Natural killer cell (primary cell): ENCODE measurements at regions of chr19 and their contacts with region 1.

Region 1: DNA sequence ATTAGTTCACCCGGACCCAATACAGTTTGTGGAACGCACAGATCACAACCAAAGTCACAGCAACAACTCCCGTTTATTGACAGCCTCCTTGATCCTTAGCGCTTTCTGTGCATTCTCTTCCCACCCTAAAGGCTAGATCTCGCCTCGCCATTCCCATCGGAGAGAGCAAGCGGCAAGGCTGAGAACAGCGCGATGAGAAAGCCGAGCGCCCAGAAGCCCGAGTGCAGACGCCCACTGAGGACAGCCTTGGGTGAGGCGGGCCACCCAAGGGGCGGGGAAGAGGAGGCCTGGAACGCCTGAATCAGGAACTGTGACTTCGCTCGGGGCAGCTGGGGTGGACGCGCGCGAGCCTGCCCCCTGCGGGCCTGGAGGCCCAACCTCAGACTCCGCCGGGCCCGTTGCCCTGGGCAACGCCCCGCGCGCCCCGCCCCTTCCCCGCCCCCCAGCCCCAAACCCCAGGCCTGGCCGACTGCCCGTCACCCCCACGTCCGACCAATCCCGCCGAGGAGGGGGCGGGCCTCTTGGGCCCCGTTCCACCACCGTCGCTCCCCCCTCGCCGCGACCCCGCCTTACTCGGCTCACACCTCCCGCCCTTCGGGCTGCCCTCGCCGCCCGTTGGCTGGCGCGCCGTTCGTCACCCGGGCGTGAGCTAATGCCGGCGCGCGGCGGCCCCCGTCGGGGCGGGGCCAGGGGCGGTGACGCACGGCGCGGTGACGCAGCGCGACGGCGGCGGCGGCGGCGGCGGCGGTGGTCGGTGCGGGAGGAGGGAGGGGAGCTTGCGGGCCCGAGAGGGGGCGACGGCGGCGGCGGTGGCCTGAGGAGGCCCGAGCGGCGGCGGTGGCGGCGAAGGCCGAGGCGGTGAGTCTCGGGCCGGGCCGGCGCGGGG is at the start of gene SAMD4B:
- DNase-seq: peak; percentile 99
- ATAC-seq: peak; percentile 88 to 96 (median 88)
- H3K4me3 ChIP-seq: peak within 1 kb of the TSS; percentile 97
- H3K4me3 Mint-ChIP-seq: peak within 1 kb of the TSS; percentile 99
- H3K27ac ChIP-seq: peak within 1 kb of the TSS; percentile 86
- H3K27ac Mint-ChIP-seq: peak within 1 kb of the TSS; percentile 97
- H3K4me1 ChIP-seq: peaks cover 23% of the 10 kb centered on the region
- H3K4me1 Mint-ChIP-seq: peaks cover 48 to 66% of the 10 kb centered on the region in 2 donors
- H3K27me3 ChIP-seq: no peaks in the 10 kb centered on the region
- H3K27me3 Mint-ChIP-seq: no peaks in the 10 kb centered on the region
- CTCF ChIP-seq: peak; percentile 80
- total RNA-seq, gene SAMD4B: 67.8 to 80.8 (median 78.9) TPM

Region 2: DNA sequence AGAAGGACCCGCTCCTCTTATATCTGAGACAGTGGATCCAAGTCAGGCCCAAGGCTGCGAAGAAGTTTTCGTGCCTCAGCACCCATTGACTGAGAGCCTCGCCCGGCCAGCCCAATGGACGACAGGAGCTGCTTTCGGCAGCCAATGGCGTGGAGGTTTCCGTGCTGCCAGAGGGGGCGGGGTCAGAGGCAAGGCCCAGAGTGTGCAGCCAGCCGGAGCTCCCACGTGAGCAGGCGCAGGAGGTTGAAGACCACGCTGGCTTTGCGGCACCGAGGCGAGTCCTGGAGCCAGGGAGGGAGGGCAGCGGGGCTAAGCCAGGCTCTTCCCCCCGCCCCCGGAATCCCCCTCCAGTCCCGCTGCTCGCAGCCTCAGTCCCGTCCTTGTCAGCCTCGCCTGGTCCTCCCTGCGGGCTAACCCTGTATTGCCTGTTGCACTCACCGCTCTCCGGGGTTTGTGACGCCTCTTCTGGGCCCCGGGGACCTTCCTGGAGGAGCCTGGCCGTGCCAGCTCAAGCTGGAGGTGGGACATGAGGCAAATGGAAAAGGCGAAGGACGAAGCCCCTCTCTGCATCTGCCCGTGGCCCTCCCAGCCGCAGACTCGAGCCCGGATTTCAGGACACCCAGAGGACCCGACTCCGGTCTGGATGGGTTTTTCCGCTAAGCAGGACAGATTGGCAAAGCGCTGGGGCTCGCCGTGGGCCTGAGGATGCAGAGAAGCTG is 94.9 kb before region 1 on chr19:
- intact Hi-C with region 1: no loop called
- DNase-seq: peak in 1 of 2 donors; percentile 58
- ATAC-seq: peak in 1 of 3 donors; percentile 70
- H3K4me3 ChIP-seq: no peak overlapping the region
- H3K4me3 Mint-ChIP-seq: peak overlapping the region; percentile 45
- H3K27ac ChIP-seq: no peak overlapping the region
- H3K27ac Mint-ChIP-seq: no peak overlapping the region
- H3K4me1 ChIP-seq: peaks cover 14% of the 10 kb centered on the region
- H3K4me1 Mint-ChIP-seq: no peaks in the 10 kb centered on the region
- H3K27me3 ChIP-seq: peaks cover 17% of the 10 kb centered on the region
- H3K27me3 Mint-ChIP-seq: peaks cover 12 to 13% of the 10 kb centered on the region in 2 donors
- CTCF ChIP-seq: no peak

Region 3: DNA sequence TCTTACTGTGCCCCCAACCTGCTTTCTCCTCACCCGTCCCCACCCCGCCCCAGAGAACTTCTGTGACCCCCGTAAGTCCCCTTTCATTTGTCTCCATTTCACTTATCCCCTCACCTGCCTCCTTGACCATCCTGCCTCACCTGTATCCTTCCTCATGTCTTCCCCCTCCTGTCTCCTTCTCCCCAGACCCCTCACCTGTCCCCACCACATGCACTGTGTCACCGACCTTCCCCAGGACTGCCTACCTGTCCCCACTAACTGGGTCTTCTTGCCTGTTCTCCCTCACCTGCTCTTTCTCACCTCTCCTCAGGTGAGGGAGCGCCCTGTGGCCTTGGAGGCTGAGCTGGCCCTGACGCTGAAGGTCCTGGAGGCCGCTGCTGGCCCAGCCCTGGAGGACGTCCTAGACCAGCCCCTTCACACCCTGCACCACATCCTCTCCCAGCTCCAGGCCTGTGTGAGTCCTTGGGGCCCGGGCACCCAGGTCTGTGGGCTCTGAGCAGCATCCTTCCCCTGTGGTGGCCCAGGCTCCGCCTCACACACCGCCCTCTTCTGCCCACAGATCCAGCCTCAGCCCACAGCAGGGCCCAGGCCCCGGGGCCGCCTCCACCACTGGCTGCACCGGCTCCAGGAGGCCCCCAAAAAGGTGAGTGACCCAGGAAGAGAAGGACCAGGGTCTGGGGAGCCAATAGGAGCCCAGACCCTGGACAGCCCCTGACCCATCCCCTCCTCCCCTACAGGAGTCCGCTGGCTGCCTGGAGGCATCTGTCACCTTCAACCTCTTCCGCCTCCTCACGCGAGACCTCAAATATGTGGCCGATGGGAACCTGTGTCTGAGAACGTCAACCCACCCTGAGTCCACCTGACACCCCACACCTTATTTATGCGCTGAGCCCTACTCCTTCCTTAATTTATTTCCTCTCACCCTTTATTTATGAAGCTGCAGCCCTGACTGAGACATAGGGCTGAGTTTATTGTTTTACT is 44.0 kb before region 1 on chr19:
- intact Hi-C with region 1: loop called (anchors 5 kb)
- DNase-seq: peak; percentile 80 to 81
- ATAC-seq: peak; percentile 83 to 93 (median 91)
- H3K4me3 ChIP-seq: peak overlapping the region; percentile 41
- H3K4me3 Mint-ChIP-seq: peak overlapping the region; percentile 86
- H3K27ac ChIP-seq: peak overlapping the region; percentile 66
- H3K27ac Mint-ChIP-seq: peak overlapping the region; percentile 80 to 81
- H3K4me1 ChIP-seq: peaks cover 44% of the 10 kb centered on the region
- H3K4me1 Mint-ChIP-seq: peaks cover 39 to 47% of the 10 kb centered on the region in 2 donors
- H3K27me3 ChIP-seq: no peaks in the 10 kb centered on the region
- H3K27me3 Mint-ChIP-seq: no peaks in the 10 kb centered on the region
- CTCF ChIP-seq: no peak

Region 4: GRCh38 chr19:39381910-39382611 is 40.1 kb after region 1 on chr19:
- intact Hi-C with region 1: no loop called
- DNase-seq: no peak
- ATAC-seq: no peak
- H3K4me3 ChIP-seq: no peak overlapping the region
- H3K4me3 Mint-ChIP-seq: no peak overlapping the region
- H3K27ac ChIP-seq: no peak overlapping the region
- H3K27ac Mint-ChIP-seq: peak overlapping the region in 1 of 2 donors; percentile 26
- H3K4me1 ChIP-seq: no peaks in the 10 kb centered on the region
- H3K4me1 Mint-ChIP-seq: peaks cover 0 to 18% of the 10 kb centered on the region in 2 donors
- H3K27me3 ChIP-seq: no peaks in the 10 kb centered on the region
- H3K27me3 Mint-ChIP-seq: no peaks in the 10 kb centered on the region
- CTCF ChIP-seq: no peak

Region 5: DNA sequence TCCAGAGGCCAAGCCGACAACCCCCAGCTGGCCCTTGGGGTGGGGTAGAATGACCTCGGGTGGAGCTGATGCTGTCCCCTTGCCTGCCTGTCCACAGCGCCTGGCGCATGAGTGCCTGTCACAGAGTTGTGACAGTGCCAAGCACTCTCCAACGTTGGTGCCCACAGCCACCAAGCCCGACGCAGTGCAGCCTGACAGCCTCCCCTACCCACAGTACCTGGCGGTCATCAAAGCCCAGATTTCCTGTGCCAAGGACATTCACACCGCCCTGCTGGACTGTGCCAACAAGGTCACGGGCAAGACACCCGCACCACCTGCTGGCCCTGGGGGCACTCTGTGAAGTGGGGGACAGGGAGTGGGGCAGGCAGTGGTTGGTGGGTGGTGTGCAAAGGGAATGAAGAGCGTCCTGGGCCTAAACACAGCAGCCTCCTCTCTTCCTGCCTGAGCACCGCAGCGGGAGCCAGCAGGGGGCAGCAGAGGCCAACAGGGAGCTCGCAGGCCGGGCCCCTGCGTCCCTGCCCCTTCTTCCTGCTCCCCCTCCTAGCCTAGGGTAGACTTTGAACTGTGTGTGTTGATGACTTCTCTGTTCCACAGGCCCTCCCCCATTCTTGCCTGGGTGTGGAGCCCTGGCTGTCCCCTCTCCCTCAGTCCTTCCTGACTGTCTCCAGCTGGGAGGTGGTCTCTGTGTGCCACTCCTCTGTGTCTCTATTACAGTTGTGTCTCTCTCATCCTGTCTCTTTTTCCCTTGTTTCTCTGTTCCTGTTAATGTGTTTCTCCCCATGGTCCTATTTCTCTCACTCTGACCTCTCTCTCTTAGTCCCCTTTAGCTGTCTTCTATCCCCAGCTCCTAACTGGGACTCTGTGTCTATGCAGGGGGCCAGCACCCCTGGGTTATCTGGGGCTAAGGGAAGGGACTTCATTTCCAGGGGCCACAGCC is 55.7 kb after region 1 on chr19:
- intact Hi-C with region 1: no loop called
- DNase-seq: peak; percentile 95 to 96
- ATAC-seq: peak; percentile 41 to 66 (median 42)
- H3K4me3 ChIP-seq: no peak overlapping the region
- H3K4me3 Mint-ChIP-seq: peak overlapping the region; percentile 61
- H3K27ac ChIP-seq: peak overlapping the region; percentile 91
- H3K27ac Mint-ChIP-seq: peak overlapping the region; percentile 96 to 97
- H3K4me1 ChIP-seq: peaks cover 57% of the 10 kb centered on the region
- H3K4me1 Mint-ChIP-seq: peaks cover 44 to 50% of the 10 kb centered on the region in 2 donors
- H3K27me3 ChIP-seq: no peaks in the 10 kb centered on the region
- H3K27me3 Mint-ChIP-seq: no peaks in the 10 kb centered on the region
- CTCF ChIP-seq: peak; percentile 96

Region 6: DNA sequence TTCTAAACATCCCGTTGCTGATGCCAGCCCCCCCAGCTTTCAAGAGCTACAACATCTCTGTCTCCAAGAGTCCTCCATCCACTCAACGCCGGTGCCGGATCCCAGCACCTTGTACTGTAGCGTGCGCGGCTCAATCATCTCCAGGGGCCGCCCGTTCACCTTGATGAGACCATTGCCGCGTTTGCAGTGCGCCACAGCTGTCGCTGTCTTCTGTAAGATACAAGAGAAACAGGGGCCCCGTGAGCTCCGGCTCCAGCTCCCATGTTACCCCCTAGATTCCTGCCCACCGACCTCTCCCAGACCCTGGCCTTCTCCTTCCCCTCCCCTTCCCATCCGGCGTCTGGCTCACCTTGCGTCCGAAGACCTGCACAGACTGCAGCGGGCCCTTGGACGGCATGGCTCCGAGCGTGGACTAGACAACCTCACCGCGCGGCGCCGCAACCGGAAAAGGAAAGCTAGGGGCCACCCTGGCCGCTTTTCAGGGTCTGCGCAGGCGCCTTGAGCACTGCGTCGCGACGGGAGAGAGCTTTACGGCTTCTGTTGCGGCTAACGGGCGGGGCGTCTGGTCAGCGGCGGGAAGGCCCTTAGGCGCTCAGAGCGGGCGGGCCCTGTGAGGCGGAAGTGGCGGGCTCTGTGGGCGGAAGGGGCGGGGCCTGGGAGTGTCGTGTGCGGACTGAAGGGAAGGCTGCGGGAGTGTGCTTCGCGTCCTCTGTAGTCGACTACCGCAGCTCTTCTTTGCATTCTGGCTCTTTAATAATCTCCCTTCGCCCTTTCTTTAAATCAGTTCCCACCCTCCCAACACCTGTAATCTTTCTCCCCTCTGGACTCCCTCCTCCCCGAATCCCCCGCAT is 93.8 kb after region 1 on chr19 and contains the start of gene RPS16:
- intact Hi-C with region 1: loop called (anchors 2 kb)
- DNase-seq: peak; percentile 99
- ATAC-seq: peak; percentile 94 to 99 (median 94)
- H3K4me3 ChIP-seq: peak within 1 kb of the TSS; percentile 76
- H3K4me3 Mint-ChIP-seq: peak within 1 kb of the TSS; percentile 99
- H3K27ac ChIP-seq: peak within 1 kb of the TSS; percentile 95
- H3K27ac Mint-ChIP-seq: peak within 1 kb of the TSS; percentile 96 to 98
- H3K4me1 ChIP-seq: peaks cover 32% of the 10 kb centered on the region
- H3K4me1 Mint-ChIP-seq: peaks cover 27 to 36% of the 10 kb centered on the region in 2 donors
- H3K27me3 ChIP-seq: no peaks in the 10 kb centered on the region
- H3K27me3 Mint-ChIP-seq: peaks cover 0 to 3% of the 10 kb centered on the region in 2 donors
- CTCF ChIP-seq: no peak
- total RNA-seq, gene RPS16: 1,227 to 1,543 (median 1,399) TPM